Activated CD4-positive, alpha-beta T cell treated with anti-CD3 and anti-CD28 coated beads for 36 hours (primary cell): ENCODE measurements at regions of chr12 and their contacts with region 1.

Region 1: GRCh38 chr12:103647267-103647666 is 60.2 kb downstream of the STAB2 start:
- DNase-seq: no peak
- ATAC-seq: no peak
- H3K4me3 Mint-ChIP-seq: no peak overlapping the region
- H3K27ac Mint-ChIP-seq: no peak overlapping the region
- H3K4me1 Mint-ChIP-seq: no peaks in the 10 kb centered on the region
- H3K27me3 Mint-ChIP-seq: peaks cover 6% of the 10 kb centered on the region

Region 2: DNA sequence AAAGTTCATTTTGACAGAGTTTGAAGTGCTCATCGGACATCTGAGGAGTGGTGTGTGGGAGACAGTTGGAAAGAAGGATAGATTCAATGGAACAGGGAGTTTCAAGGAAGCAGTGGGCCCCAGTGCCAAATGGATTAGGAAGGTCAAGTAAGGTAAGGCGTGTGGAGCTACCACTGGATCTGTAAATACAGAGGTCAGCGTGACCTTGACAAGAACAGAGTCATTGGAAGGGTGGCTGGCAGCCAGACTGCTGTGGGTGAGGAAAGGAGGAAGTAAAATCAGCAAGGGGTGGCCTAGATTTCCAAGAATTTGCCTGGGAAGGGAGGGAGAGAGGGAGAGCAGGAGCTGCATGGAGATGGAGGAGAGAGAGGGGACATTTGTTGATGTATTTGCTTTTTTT is 1098.7 kb before region 1 on chr12:
- CTCF ChIA-PET with region 1: no interaction called
- POLR2A ChIA-PET with region 1: interaction called, 10 read pairs
- intact Hi-C with region 1: no loop called
- DNase-seq: no peak
- ATAC-seq: no peak
- H3K4me3 Mint-ChIP-seq: no peak overlapping the region
- H3K27ac Mint-ChIP-seq: no peak overlapping the region
- H3K4me1 Mint-ChIP-seq: no peaks in the 10 kb centered on the region
- H3K27me3 Mint-ChIP-seq: peaks cover 2% of the 10 kb centered on the region

Region 3: DNA sequence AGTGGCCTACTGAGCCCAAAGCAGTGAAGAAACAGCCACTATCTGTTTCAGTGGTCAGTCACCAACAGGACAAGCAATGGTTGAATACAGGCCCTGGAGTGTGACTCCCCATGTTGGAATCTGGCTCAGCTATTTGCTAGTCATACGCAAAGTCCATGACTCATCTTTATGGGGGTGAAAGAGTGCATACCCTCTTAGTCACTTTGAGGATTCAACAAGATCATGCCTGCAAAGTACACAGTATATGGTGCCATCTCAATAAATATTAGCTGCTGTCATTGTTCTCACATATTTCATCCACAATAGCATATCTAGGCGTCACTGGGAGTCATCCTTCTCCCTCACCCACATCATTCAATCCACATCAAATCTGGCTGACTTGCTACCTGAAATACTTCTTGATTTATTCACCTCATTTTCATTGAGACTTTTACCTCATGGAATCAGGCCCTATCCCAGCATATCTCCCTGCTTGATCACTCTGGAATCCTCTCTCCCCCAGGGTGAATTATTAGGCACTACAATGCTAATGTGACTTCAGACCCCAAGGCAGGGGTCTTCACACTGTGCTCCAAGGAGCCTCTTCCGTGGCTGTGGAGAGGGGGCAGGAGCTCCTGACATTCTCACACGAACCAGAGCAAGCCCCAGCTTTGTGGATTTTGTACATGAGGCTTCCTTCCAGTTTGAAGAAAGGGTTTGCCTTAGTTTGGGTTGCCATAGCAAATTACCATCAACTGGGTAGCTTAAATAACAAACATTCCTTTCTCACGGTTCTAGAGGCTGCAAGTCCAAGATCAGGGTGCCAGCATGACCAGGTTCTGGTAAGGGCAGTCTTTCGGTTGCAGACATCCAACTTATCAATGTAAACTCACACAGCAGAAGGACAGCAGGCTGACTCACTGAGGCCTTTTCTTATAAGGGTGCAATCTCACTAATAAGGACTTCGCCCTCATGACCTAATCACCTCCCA is 86.4 kb before region 1 on chr12:
- CTCF ChIA-PET with region 1: no interaction called
- POLR2A ChIA-PET with region 1: no interaction called
- intact Hi-C with region 1: no loop called
- DNase-seq: no peak
- ATAC-seq: peak; percentile 75
- H3K4me3 Mint-ChIP-seq: no peak overlapping the region
- H3K27ac Mint-ChIP-seq: no peak overlapping the region
- H3K4me1 Mint-ChIP-seq: no peaks in the 10 kb centered on the region
- H3K27me3 Mint-ChIP-seq: peaks cover 4% of the 10 kb centered on the region